Vagina (tissue), 2 donors: ENCODE measurements at regions of chr2 and their contacts with region 1.

Region 1: GRCh38 chr2:109242654-109243331 is 113.8 kb downstream of the SH3RF3 start:
- DNase-seq: peak in 1 of 2 donors; percentile 55
- H3K4me3 ChIP-seq: no peak overlapping the region
- H3K27ac ChIP-seq: peak overlapping the region; percentile 89
- H3K4me1 ChIP-seq: peaks cover 75% of the 10 kb centered on the region
- H3K27me3 ChIP-seq: no peaks in the 10 kb centered on the region
- CTCF ChIP-seq: no peak
- POLR2A ChIP-seq: no peak

Region 2: DNA sequence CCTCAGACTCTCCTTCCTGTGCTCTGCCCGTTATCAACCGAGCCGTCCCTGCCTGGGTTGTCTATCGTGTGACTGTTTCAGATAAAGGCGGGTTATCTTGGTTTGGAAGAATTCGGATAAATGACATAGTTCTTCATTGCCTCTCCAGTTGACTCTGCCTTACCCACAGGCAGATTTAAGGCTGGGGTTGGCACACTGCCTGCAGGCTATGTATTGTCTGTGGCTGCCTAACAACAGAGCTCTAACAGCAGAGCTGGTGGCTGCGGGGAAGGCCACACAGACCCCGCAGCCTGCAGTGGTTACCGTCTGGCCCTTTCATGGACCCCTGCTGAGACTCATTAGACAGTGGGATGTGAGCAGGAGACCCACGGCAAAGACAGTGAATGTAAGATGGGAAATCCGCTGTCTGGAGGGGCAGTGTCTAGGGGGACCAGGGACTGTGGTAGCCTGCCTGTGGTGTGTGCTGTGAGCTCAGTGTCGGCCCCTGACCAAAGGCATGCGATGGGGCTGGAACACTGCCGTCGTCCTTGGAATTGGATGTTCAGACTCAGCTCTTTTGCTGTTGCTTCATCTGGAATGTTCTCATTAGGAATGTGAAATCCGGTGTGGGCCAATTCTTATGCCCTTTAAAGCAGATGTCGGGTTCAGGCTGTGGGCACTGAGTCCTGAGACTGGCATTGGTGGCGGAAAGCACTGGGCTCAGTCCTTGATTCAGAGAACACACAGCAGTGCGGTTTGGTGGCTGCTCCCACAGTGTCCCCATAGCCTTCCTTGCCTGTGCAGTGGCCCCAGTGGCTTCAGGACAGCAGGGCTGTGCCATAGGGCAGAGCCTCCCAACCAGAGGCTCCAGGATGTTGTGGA is 69.3 kb before region 1 on chr2:
- intact Hi-C with region 1: loop called (anchors 5 kb)
- DNase-seq: no peak
- H3K4me3 ChIP-seq: no peak overlapping the region
- H3K27ac ChIP-seq: peak overlapping the region; percentile 84
- H3K4me1 ChIP-seq: peaks cover 62% of the 10 kb centered on the region
- H3K27me3 ChIP-seq: no peaks in the 10 kb centered on the region
- CTCF ChIP-seq: no peak
- POLR2A ChIP-seq: no peak

Region 3: GRCh38 chr2:109318150-109318948 is 75.6 kb after region 1 on chr2:
- intact Hi-C with region 1: loop called (anchors 2 kb)
- DNase-seq: peak in 1 of 2 donors; percentile 96
- H3K4me3 ChIP-seq: no peak overlapping the region
- H3K27ac ChIP-seq: peak overlapping the region; percentile 57
- H3K4me1 ChIP-seq: peaks cover 61% of the 10 kb centered on the region
- H3K27me3 ChIP-seq: no peaks in the 10 kb centered on the region
- CTCF ChIP-seq: peak in 1 of 3 experiments; percentile 5
- POLR2A ChIP-seq: no peak